Activated naive CD8-positive, alpha-beta T cell treated with anti-CD3 and anti-CD28 coated beads, Interleukin-2, amount 10 ng/mL, durations not matched to agents 7 days and 5 days (primary cell): ENCODE measurements at regions of chr2 and their contacts with region 1.

Region 1: DNA sequence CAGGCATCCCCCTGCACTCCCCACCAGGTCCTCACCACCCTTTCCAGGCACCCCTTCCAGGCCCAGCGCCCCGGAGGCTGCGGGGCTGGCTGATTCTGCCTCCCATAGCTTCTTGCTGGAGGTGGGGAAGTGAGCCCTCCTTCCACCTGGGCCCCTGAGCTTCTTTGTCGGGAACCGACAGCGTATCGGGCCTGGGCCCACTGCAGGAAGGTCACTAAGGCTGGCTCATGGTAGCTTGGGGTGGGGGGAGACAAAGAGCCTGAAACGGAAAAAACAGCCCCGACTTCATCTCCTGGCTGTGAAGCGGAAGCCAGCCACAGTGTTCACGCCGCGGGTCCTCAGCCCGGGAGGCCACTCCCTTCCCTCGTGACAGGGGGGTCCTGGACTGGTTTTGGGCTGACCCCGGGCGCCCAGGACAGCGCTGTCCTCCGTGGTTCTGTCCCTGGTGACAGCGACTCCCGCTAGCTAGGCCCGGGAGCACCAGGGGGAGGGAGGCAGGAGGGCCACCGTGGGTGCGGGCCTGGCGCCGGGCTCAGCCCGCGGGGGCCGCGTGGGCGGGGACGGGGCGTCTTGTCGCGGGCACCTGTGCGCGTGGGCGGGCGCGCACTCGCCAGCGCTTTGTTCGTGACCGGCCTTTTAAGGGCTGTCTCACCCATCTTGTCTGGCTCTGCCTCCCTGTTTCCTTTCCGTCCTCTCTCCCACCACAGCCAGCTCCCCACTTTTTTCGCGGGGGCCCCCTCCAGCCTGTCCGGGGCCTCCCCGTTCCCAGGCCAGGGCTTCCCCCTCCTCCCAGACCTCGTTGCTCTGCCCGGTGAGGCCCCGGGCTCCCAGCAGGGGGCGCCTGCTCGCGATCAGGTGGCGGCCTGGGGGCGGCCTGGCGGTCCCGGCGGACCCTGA is 64.9 kb downstream of the DNMT3A start:
- DNase-seq: peak; percentile 93
- ATAC-seq: peak; percentile 48
- H3K4me3 Mint-ChIP-seq: peak overlapping the region; percentile 71
- H3K27ac Mint-ChIP-seq: peak overlapping the region; percentile 95
- H3K4me1 Mint-ChIP-seq: peaks cover 56% of the 10 kb centered on the region
- H3K27me3 Mint-ChIP-seq: no peaks in the 10 kb centered on the region

Region 2: DNA sequence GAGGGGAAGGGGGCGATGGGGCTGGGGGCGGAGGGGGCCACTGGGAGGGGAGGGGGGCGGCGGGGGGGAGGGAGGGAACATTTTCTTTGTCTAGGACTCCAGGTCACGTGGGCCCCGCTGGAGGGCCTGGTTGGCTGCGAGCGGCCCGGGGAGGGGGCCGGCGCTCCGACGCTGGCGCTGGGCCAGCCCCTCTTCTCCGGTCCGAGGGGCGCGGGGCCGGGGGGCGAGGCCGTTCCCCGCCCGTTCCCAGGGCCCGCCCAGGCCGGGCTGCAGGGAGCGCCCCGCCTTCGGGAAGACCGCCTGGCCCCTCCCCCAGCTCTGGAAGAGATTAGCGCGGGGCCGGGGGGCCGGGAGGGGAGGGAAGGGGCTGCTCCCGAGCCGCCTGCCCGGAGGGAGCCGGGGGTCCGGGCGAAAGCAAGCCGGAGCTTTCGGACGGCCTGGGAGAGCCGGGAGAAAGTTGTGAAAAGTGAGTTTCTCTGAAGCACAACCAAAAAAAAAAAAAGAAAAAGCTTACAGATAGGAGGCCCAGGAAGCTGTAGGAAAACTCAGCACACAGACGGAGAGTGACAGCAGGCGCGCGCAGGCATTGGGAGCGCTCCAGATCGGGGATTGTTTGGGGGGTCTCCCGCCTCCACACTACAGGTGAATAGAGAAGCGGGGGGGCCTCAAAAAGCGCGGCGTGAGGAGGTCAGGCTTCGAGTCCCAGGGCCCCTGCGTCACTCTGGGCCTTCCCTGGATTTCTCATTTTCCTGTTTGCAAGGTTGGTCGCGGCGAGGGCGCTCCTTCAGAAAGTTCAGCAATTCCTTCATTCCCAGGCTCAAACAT is 24.3 kb before region 1 on chr2:
- POLR2A ChIA-PET with region 1: interaction called, 21 read pairs
- DNase-seq: peak; percentile 68
- ATAC-seq: peak; percentile 64
- H3K4me3 Mint-ChIP-seq: peak overlapping the region; percentile 87
- H3K27ac Mint-ChIP-seq: peak overlapping the region; percentile 84
- H3K4me1 Mint-ChIP-seq: peaks cover 26% of the 10 kb centered on the region
- H3K27me3 Mint-ChIP-seq: no peaks in the 10 kb centered on the region

Region 3: DNA sequence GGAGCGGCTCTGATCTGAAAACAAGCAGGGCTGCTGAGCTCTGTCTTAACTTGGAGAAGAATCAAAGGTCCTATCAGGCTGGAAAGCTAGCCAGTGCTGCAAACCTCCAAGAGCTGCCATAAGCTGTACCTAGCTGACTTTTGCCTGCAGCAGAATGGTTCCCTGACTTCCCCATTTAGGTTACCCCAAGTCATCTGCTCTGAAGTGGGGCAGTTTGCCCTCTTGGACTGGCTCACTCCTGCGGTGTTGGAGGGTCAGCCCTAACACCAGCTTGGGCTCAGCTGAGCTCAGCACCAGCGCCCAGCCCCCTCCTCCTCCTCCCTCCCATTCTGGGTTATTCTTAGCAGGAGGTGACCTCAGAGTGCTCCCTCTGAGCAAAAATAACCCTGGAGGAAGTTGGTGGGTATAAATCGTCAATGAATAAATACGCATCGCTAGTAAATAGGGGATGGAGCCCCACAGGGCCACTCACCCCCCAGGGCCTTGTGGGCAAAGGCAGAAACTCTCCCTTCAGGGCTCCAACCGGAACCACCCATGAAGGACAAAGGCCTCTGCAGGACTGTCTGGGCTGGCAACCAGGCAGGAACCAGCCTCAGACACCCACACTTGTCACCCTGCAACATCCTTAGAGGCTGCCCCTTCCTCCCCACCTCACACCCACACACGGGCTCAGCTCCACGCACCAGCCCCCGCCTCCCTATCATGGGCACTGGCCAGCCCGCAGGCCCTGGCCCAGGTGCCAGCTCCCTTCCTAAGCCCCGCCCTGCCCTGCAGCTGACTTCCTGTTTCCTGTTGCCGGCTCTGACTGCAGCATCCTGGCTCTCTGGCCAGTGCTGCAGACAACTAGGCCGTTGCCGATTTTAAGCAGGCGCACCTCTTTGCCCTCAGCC is 18.0 kb after region 1 on chr2:
- POLR2A ChIA-PET with region 1: interaction called, 107 read pairs
- DNase-seq: peak; percentile 83
- ATAC-seq: peak; percentile 89
- H3K4me3 Mint-ChIP-seq: peak overlapping the region; percentile 77
- H3K27ac Mint-ChIP-seq: peak overlapping the region; percentile 93
- H3K4me1 Mint-ChIP-seq: peaks cover 44% of the 10 kb centered on the region
- H3K27me3 Mint-ChIP-seq: no peaks in the 10 kb centered on the region

Region 4: GRCh38 chr2:25301453-25302352 is 24.9 kb after region 1 on chr2:
- POLR2A ChIA-PET with region 1: interaction called, 24 read pairs
- DNase-seq: peak; percentile 72
- ATAC-seq: peak; percentile 94
- H3K4me3 Mint-ChIP-seq: peak overlapping the region; percentile 20
- H3K27ac Mint-ChIP-seq: peak overlapping the region; percentile 82
- H3K4me1 Mint-ChIP-seq: peaks cover 50% of the 10 kb centered on the region
- H3K27me3 Mint-ChIP-seq: no peaks in the 10 kb centered on the region